Caco-2 (cell line): ENCODE measurements at regions of chr12 and their contacts with region 1.

Region 1: GRCh38 chr12:3896801-3897331 is 23.7 kb upstream of the PARP11 start:
- DNase-seq: peak; percentile 71 to 77
- H3K4me3 ChIP-seq: no peak overlapping the region
- H3K4me3 Mint-ChIP-seq: no peak overlapping the region
- H3K27ac Mint-ChIP-seq: peak overlapping the region; percentile 57
- H3K4me1 ChIP-seq: peaks cover 42% of the 10 kb centered on the region
- H3K4me1 Mint-ChIP-seq: peaks cover 22% of the 10 kb centered on the region
- H3K27me3 ChIP-seq: no peaks in the 10 kb centered on the region
- H3K27me3 Mint-ChIP-seq: no peaks in the 10 kb centered on the region
- CTCF ChIP-seq: no peak

Region 2: DNA sequence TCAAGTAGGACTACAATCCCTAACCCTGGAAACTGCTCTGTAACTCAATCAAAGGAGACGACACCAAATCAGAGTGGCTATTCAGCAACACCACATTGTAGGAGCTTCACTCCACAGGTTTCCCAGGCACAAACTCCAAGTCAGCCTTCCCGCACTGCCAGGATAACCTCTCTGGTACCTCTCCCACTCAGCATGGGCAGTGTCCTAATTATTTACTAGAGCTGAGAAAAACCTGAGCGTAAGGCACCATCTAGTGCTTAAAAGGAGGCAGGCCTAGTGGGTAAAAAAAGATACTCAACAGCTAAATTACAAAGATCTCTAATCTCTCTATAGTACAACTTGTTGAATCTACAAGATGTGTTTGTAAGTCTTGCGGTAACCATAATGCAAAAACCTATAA is 59.8 kb before region 1 on chr12:
- CTCF ChIA-PET with region 1: no interaction called
- POLR2A ChIA-PET with region 1: no interaction called
- intact Hi-C with region 1: no loop called
- DNase-seq: no peak
- H3K4me3 ChIP-seq: no peak overlapping the region
- H3K4me3 Mint-ChIP-seq: no peak overlapping the region
- H3K27ac Mint-ChIP-seq: no peak overlapping the region
- H3K4me1 ChIP-seq: peaks cover 8% of the 10 kb centered on the region; the same call in 1 of the 2 replicates
- H3K4me1 Mint-ChIP-seq: peaks cover 19% of the 10 kb centered on the region
- H3K27me3 ChIP-seq: peaks cover 1% of the 10 kb centered on the region
- H3K27me3 Mint-ChIP-seq: no peaks in the 10 kb centered on the region
- CTCF ChIP-seq: peak in 1 of 2 experiments; percentile 13

Region 3: GRCh38 chr12:3872800-3873636 is 23.8 kb before region 1 on chr12 and contains the start of gene PARP11:
- CTCF ChIA-PET with region 1: no interaction called
- POLR2A ChIA-PET with region 1: interaction called, 3 read pairs
- intact Hi-C with region 1: loop called (anchors 1 kb)
- DNase-seq: peak; percentile 98
- H3K4me3 ChIP-seq: peak within 1 kb of the TSS; percentile 73
- H3K4me3 Mint-ChIP-seq: peak within 1 kb of the TSS; percentile 95
- H3K27ac Mint-ChIP-seq: peak within 1 kb of the TSS; percentile 87
- H3K4me1 ChIP-seq: peaks cover 4% of the 10 kb centered on the region
- H3K4me1 Mint-ChIP-seq: peaks cover 9% of the 10 kb centered on the region
- H3K27me3 ChIP-seq: no peaks in the 10 kb centered on the region
- H3K27me3 Mint-ChIP-seq: peaks cover 2% of the 10 kb centered on the region
- CTCF ChIP-seq: no peak
- total RNA-seq, gene PARP11: 18.1 and 19.0 TPM in 2 replicates

Region 4: DNA sequence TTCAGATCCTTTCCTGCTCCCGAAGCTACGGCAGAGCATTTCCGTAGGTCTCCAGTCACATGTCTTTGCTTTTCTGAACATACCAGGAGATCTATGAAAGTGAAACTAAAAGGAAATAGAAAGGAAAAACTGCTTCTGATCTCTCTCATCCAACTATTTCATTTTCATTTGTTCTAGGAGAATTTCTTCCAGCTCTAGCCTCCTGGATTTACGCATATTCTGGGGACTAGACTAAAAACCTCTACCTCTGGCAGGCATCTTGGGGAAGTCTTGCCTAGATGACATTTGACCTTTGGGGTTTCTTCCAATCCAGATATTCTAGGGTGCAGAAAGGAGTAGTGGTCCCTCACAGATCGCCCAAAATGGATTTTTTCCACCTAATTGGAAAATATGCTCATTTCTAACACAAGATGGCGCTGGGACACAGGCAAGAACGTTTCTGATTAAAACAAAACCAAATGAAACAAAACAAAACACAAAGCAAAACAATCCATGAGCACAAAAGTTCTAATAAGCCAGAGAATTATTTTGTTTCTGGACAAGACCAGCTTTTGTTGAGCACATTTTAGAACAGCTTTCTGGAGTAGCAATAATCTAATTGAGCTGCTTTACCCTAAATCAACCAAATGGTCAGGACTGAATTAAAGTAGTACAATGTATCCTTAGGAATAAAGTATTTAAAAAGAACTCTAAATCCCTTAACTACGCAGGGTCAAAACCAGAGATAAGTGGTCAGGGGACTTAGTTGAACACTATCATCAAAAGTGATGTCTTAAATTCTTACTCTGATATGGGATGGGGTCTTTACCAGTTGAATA is 11.4 kb before region 1 on chr12:
- CTCF ChIA-PET with region 1: interaction called, 10 read pairs
- POLR2A ChIA-PET with region 1: no interaction called
- intact Hi-C with region 1: no loop called
- DNase-seq: peak in 1 of 2 experiments; percentile 67
- H3K4me3 ChIP-seq: no peak overlapping the region
- H3K4me3 Mint-ChIP-seq: no peak overlapping the region
- H3K27ac Mint-ChIP-seq: no peak overlapping the region
- H3K4me1 ChIP-seq: 0 out of 2 replicates have a peak, but pooled peaks cover 3% of the 10 kb centered on the region
- H3K4me1 Mint-ChIP-seq: peaks cover 14% of the 10 kb centered on the region
- H3K27me3 ChIP-seq: no peaks in the 10 kb centered on the region
- H3K27me3 Mint-ChIP-seq: peaks cover 7% of the 10 kb centered on the region
- CTCF ChIP-seq: peak; percentile 90 to 98

Region 5: DNA sequence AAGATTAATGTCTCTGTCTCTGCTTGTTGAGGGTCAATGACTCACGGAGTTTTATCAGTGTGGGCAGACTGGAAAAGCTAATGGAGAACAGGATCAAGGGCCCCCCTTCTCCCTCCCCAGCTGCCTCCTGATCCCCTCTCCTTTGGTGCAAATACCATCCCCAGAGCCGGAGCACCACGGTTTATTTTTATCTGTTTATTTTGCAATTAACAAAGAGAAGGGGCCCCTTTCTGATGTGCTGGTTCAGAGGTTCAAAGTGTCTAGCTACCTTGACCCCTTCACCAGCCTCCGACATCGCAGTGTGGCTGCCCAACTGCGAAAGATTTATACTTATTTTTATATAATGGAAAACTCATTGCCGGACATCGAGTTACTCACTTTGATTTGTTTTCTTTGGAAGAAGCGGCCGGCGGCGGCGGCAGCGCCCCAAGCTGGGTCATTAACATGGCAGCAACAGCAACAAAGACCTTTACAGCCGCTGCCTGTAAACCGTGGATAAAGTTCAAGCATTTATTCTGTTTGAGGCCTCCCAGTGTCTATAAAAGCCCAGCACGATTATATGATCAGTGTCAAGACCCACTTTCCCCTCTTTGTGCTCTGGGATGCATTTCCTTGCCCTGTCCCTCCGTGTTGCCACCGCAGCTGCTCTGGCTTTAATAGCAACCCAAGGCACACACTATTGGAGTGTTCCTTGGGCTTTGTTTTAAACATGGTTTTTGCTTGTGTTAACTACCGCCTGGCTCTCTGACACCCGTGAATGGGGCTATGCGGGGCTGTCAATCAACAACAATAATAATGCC is 23.7 kb after region 1 on chr12:
- CTCF ChIA-PET with region 1: interaction called, 5 read pairs
- POLR2A ChIA-PET with region 1: interaction called, 6 read pairs
- intact Hi-C with region 1: loop called (anchors 1 kb)
- DNase-seq: peak; percentile 65 to 86
- H3K4me3 ChIP-seq: peak overlapping the region; percentile 23
- H3K4me3 Mint-ChIP-seq: no peak overlapping the region
- H3K27ac Mint-ChIP-seq: no peak overlapping the region
- H3K4me1 ChIP-seq: peaks cover 35% of the 10 kb centered on the region
- H3K4me1 Mint-ChIP-seq: peaks cover 12% of the 10 kb centered on the region
- H3K27me3 ChIP-seq: no peaks in the 10 kb centered on the region
- H3K27me3 Mint-ChIP-seq: peaks cover 5% of the 10 kb centered on the region
- CTCF ChIP-seq: no peak

Region 6: GRCh38 chr12:3964439-3964838 is 67.6 kb after region 1 on chr12:
- CTCF ChIA-PET with region 1: interaction called, 4 read pairs
- POLR2A ChIA-PET with region 1: interaction called, 3 read pairs
- intact Hi-C with region 1: loop called (anchors 1 kb)
- DNase-seq: peak; percentile 58 to 61
- H3K4me3 ChIP-seq: no peak overlapping the region
- H3K4me3 Mint-ChIP-seq: no peak overlapping the region
- H3K27ac Mint-ChIP-seq: no peak overlapping the region
- H3K4me1 ChIP-seq: peaks cover 64% of the 10 kb centered on the region
- H3K4me1 Mint-ChIP-seq: peaks cover 61% of the 10 kb centered on the region
- H3K27me3 ChIP-seq: no peaks in the 10 kb centered on the region
- H3K27me3 Mint-ChIP-seq: no peaks in the 10 kb centered on the region
- CTCF ChIP-seq: peak; percentile 51 to 74

Region 7: GRCh38 chr12:4011597-4011996 is 114.7 kb after region 1 on chr12:
- CTCF ChIA-PET with region 1: no interaction called
- POLR2A ChIA-PET with region 1: interaction called, 5 read pairs
- intact Hi-C with region 1: loop called (anchors 1 kb)
- DNase-seq: peak; percentile 86 to 91
- H3K4me3 ChIP-seq: no peak overlapping the region
- H3K4me3 Mint-ChIP-seq: peak overlapping the region; percentile 12
- H3K27ac Mint-ChIP-seq: peak overlapping the region; percentile 35
- H3K4me1 ChIP-seq: peaks cover 68% of the 10 kb centered on the region
- H3K4me1 Mint-ChIP-seq: peaks cover 57% of the 10 kb centered on the region
- H3K27me3 ChIP-seq: no peaks in the 10 kb centered on the region
- H3K27me3 Mint-ChIP-seq: no peaks in the 10 kb centered on the region
- CTCF ChIP-seq: no peak

Region 8: DNA sequence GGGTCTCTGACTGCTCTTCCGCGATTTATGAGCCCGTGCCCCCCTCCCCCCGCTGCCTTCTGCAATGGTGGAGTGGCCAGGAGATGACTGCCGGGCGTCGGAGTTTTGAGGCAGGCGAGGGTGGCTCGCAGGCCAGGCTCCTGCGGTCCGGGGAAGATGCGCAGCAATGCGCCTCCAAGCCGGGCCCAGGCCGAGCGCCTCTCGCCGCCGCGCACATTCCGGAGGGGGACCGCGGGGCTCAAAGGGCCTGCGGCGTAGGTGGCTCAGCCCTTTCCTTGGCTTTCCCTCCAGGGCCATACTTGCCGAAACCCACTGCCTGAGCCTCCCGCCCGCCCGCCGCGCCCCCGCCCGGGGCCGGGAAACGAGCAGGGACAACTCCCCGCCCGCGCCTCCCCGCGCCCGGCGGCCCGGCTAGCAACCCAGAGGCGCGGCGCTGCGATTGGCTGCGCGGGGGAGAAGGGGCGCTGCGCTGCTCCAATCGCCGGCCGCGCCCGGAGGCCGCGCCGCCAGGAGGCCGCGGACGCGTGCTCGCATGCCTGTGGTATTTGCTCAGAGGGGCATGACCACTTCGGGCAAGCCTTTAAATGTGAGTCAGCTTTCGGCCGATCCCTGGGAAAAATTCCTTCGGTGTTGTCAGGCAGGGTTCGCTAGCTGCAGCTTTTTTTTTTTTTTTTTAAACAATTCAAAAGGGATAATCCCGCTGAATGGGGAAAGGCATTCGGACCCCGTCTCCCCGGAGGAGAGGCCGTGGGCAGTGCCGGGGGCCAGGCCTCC is 134.2 kb after region 1 on chr12:
- CTCF ChIA-PET with region 1: interaction called, 3 read pairs
- POLR2A ChIA-PET with region 1: interaction called, 7 read pairs
- intact Hi-C with region 1: loop called (anchors 1 kb)
- DNase-seq: peak; percentile 99
- H3K4me3 ChIP-seq: peak overlapping the region; percentile 44
- H3K4me3 Mint-ChIP-seq: peak overlapping the region; percentile 67
- H3K27ac Mint-ChIP-seq: peak overlapping the region; percentile 96
- H3K4me1 ChIP-seq: peaks cover 49% of the 10 kb centered on the region
- H3K4me1 Mint-ChIP-seq: peaks cover 57% of the 10 kb centered on the region
- H3K27me3 ChIP-seq: no peaks in the 10 kb centered on the region
- H3K27me3 Mint-ChIP-seq: no peaks in the 10 kb centered on the region
- CTCF ChIP-seq: no peak